ENCODE measurements at regions of chr2 and their contacts with region 1.

Region 1: DNA sequence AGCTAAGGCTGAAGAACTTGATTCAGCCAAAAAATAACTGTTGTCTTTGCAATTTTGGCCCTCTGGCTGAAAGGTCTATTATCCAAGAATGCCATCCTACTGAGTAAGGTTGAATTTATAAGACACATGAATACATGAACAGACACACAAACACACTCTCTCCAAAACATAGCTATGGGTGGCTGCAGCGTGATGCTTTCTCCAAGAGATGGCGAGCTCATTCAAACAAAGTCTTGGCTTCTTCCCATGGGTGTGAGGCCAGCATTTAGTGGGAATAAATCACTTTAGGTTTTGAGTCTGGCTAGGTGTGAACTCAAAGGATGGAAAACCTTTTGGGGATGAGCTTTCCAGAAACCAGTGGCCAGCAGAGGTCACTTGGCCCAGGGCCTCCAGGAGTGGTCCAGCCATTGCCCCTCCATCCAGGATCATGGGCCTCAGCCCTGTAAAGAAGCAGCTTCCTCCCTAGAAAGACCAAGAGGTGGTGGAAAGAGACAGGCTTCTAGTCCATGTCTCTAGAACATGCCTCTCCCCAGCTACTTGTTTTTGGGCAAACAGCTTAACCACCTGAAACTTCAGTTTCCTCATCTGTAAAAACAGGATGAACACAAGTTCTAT is 11.0 kb upstream of the OSR1 start:
- DNase-seq: peak in 1 of 2 experiments; percentile 58
- ATAC-seq: peak; percentile 48 to 84; a peak in 4 of 6 replicates
- H3K4me3 ChIP-seq: no peak overlapping the region
- H3K27ac ChIP-seq: peak overlapping the region in 1 of 2 experiments; percentile 34; a peak in 3 of 6 replicates
- H3K4me1 ChIP-seq: no peaks in the 10 kb centered on the region
- CTCF ChIP-seq: peak; percentile 61
- EP300 ChIP-seq: no peak
- POLR2A ChIP-seq: no peak
- RAD21 ChIP-seq: peak; percentile 81 to 84

Region 2: DNA sequence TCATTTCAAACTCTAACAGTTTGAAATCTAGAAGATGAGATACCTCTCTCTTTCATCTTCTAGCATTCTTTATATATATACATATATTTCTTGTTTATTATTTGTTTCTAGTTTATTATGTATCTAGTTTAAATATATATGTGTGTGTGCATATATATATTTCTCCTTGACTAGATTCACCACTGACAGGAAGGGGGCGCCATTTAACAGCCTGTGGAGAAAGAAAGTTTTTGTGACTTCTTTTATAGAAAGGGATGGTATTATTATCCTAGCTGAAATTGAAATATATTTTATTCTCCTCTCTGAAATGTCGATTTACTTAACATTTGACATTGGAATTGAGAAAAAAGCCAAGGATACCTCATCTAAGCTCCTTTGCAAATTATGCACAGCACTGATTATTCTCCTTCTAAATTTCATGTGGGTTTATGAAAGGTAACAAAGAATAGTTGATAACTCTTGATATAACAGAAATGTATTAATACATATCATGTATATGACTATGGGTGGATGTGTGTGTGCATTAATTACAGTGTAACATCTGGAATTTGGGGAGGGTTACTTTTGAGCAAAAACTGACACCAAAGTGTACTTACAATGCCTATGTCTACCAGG is 619.4 kb before region 1 on chr2:
- CTCF ChIA-PET with region 1: interaction called, 19 read pairs
- POLR2A ChIA-PET with region 1: no interaction called
- DNase-seq: peak; percentile 28 to 68
- ATAC-seq: peak; percentile 40 to 77; a peak in 3 of 6 replicates
- H3K4me3 ChIP-seq: no peak overlapping the region
- H3K27ac ChIP-seq: peak overlapping the region in 1 of 2 experiments; percentile 51; a peak in 1 of 6 replicates
- H3K4me1 ChIP-seq: peaks cover 22% of the 10 kb centered on the region
- CTCF ChIP-seq: peak; percentile 97
- EP300 ChIP-seq: no peak
- POLR2A ChIP-seq: no peak
- RAD21 ChIP-seq: peak; percentile 97

Region 3: GRCh38 chr2:19336781-19337180 is 32.7 kb before region 1 on chr2:
- CTCF ChIA-PET with region 1: no interaction called
- POLR2A ChIA-PET with region 1: no interaction called
- DNase-seq: no peak
- ATAC-seq: no peak
- H3K4me3 ChIP-seq: no peak overlapping the region
- H3K27ac ChIP-seq: no peak overlapping the region
- H3K4me1 ChIP-seq: no peaks in the 10 kb centered on the region
- CTCF ChIP-seq: no peak
- EP300 ChIP-seq: no peak
- POLR2A ChIP-seq: no peak
- RAD21 ChIP-seq: no peak

Region 4: GRCh38 chr2:19667085-19667484 is 297.6 kb after region 1 on chr2:
- CTCF ChIA-PET with region 1: interaction called, 30 read pairs
- POLR2A ChIA-PET with region 1: no interaction called
- DNase-seq: peak; percentile 40 to 64
- ATAC-seq: peak; percentile 63 to 82; a peak in 5 of 6 replicates
- H3K4me3 ChIP-seq: no peak overlapping the region
- H3K27ac ChIP-seq: peak overlapping the region; percentile 34 to 53; a peak in 5 of 6 replicates
- H3K4me1 ChIP-seq: peaks cover 14% of the 10 kb centered on the region; the same call in 2 of the 3 replicates
- CTCF ChIP-seq: peak; percentile 76
- EP300 ChIP-seq: no peak
- POLR2A ChIP-seq: no peak
- RAD21 ChIP-seq: peak; percentile 80 to 93

Region 5: DNA sequence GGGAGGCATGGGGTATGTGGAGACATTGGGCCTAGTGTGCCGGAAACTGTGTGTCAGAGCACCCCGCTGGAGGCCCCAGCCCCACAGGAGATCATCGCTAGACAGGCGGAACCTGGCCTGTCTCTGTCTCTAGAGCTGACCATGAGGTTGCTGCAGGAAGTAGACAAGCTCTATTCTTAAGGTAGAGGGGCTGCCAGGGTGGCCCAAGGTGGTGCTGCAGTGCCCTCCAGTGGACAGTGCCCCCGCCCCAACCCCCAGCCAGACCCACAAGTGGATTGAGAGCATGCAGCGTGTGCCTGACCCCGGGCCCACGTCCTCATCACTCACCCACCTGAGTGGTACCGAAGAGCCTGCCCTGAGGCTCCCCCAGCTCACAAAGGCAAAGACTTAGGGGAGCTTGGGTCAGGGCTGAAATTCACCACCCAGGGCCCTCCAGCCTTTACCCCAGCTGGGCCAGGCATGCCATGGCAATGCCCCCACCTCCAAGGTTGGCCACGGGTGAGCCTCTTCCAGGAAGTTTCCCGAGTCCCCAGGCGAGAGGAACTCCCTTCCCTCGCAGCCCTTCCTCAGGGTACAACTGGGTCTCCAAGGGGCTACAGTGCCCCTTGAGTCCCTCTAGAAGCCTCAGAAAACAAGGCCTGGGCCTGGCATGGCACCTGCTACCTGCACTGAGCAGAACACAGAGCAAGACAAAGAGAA is 377.3 kb after region 1 on chr2:
- CTCF ChIA-PET with region 1: interaction called, 10 read pairs
- POLR2A ChIA-PET with region 1: interaction called, 3 read pairs
- DNase-seq: peak; percentile 48 to 72
- ATAC-seq: peak; percentile 64 to 90
- H3K4me3 ChIP-seq: no peak overlapping the region
- H3K27ac ChIP-seq: peak overlapping the region; percentile 17 to 46; a peak in 3 of 6 replicates
- H3K4me1 ChIP-seq: no peaks in the 10 kb centered on the region
- CTCF ChIP-seq: peak; percentile 49
- EP300 ChIP-seq: no peak
- POLR2A ChIP-seq: no peak
- RAD21 ChIP-seq: peak; percentile 80 to 81

Measured in A549 (cell line).